ENCODE measurements at regions of chr17 and their contacts with region 1.

Region 1: DNA sequence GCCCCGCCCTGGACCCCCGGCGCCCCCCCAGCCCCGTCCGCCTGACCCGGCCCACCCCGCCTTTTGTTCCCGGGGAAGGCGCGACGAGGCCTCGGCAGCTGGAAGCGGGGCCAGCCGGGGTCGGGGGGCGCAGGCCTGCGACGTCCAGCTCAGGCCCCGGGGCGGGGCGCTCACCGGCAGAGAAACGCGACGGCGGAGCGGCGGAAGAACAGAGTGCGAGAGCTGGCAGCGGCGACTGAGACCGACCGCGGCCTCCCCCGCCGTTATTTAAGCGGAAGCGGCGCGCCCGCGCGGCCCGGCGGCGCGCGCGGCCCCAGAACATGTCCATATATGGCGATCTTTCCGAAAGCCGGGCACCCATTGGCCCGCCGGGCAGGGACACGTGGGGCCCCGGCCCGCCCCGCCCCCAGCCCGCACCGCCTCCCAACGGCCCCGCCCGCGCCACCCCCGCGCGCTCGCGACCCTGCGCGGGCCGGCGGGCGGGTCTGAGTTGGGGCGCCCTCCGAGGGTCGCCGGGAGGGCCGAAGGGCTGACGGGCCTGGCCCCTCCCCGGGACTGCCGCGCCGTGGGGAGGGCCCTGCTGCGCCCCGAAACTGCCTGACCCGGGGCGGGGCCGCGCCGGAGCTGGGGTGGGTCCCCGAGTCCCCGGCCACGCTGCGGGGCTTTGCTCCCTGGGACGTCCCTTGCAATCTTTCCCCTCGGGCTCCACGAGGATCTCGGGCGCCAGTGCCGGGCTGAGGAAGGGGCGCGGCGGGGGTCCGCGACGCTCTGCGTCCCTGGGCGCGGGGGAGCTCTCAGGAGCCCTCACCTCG is at the start of gene ACTG1:
- DNase-seq: peak; percentile 95
- ATAC-seq: peak; percentile 70
- total RNA-seq, gene ACTG1: 468 TPM

Region 2: DNA sequence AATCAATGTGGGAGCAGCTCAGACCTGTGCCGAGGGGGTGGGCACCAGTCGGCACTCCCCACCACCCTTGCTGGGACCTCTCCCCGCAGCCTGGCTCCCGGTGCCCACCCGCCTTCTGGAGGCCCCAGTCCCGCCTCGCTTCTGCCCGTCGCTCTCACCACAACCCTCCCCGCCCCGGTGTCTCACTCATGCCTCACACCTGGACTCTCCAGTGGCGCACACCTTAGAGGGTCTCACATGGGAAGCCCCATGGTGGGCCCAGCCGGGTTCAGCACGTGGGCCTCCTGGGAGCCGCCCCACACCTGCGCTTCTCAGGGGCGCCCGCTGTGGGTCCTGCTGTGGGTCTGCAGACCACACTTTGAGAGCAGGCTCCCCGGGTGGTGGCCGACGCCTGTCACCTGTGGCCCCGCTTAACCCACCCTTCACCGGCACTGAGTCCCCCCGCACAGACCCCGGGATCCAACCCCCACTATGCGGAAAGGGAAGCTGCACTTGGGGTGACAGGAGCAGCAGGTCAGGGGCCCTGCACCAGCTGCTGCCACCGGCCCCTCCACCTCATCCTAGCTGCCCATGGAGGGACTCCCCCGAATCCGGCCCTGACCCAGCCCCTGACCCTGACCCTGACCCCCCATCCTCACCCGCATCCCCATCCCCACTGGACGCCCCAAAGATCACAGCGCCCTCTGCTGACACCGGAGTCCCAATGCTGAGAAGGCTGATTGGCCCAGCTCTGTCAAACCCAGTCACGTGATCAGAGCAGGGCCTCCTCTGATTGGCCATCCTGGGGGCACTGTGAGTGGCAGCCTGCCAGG is 190.3 kb before region 1 on chr17:
- intact Hi-C with region 1: no loop called
- DNase-seq: no peak
- ATAC-seq: no peak

Region 3: GRCh38 chr17:81553018-81553615 is 40.4 kb after region 1 on chr17:
- intact Hi-C with region 1: loop called (anchors 5 kb)
- DNase-seq: peak; percentile 81
- ATAC-seq: peak; percentile 49

Region 4: GRCh38 chr17:81601525-81602120 is 88.9 kb after region 1 on chr17:
- intact Hi-C with region 1: loop called (anchors 5 kb)
- DNase-seq: no peak
- ATAC-seq: peak; percentile 75